CD4-positive, alpha-beta T cell (primary cell): ENCODE measurements at regions of chr6 and their contacts with region 1.

Region 1: GRCh38 chr6:38702558-38703397 is at the start of gene GLO1:
- DNase-seq: peak; percentile 90 to 98 (median 94)
- ATAC-seq: peak; percentile 99
- H3K4me3 ChIP-seq: peak within 1 kb of the TSS; percentile 82
- H3K4me3 Mint-ChIP-seq: peak within 1 kb of the TSS; percentile 94
- H3K27ac ChIP-seq: peak within 1 kb of the TSS; percentile 82 to 84
- H3K27ac Mint-ChIP-seq: peak within 1 kb of the TSS; percentile 81
- H3K4me1 ChIP-seq: peaks cover 9% of the 10 kb centered on the region
- H3K4me1 Mint-ChIP-seq: peaks cover 29% of the 10 kb centered on the region
- H3K27me3 ChIP-seq: no peaks in the 10 kb centered on the region
- H3K27me3 Mint-ChIP-seq: peaks cover 15% of the 10 kb centered on the region
- CTCF ChIP-seq: no peak
- total RNA-seq, gene GLO1: 24.1 to 26.2 TPM

Region 2: DNA sequence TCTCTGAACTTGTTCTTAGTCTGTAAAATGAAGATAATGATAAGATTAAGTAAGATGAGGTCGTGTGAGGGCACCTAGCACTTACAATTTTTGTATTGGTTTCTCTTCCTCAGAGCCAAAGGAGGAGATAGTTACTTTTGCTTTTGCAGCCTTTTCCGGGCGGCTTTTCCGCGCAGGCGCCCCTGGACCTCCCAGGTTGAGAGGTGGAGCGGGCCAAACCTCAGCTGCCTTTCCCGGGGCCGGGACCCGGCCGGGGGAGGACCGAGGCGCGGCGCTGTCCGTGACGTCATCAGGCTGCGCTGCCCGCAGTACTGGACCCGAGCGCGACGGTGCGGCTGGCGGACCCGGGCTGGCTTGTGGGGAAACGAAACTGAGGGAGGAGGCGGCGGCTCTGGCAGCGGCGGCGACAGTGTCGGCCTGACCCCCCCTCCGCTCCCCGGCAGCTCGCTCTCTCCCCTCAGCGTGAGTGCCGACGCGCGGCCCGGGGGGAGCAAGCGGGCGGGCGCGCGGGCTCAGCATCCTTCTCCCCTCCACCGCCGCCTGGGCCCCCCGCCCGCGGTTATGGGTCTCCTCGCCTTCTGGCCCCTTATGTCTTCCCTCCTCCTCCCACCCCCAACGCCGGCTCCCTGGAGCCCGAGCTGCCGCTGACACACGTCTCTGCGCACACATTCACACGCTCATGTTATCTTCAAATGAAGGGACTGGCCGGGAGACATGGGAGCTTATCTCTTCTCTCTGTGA is 1269.7 kb before region 1 on chr6 and contains the start of gene CMTR1:
- CTCF ChIA-PET with region 1: no interaction called
- POLR2A ChIA-PET with region 1: no interaction called
- intact Hi-C with region 1: loop called in 1 of 2 experiments (anchors 5 kb)
- DNase-seq: peak; percentile 91 to 99 (median 96)
- ATAC-seq: peak; percentile 89
- H3K4me3 ChIP-seq: peak within 1 kb of the TSS; percentile 98
- H3K4me3 Mint-ChIP-seq: peak within 1 kb of the TSS; percentile 95
- H3K27ac ChIP-seq: peak within 1 kb of the TSS; percentile 91
- H3K27ac Mint-ChIP-seq: peak within 1 kb of the TSS; percentile 95
- H3K4me1 ChIP-seq: peaks cover 29% of the 10 kb centered on the region
- H3K4me1 Mint-ChIP-seq: peaks cover 45% of the 10 kb centered on the region
- H3K27me3 ChIP-seq: no peaks in the 10 kb centered on the region
- H3K27me3 Mint-ChIP-seq: peaks cover 6% of the 10 kb centered on the region
- CTCF ChIP-seq: no peak
- total RNA-seq, gene CMTR1: 79.7 to 80.3 TPM

Region 3: GRCh38 chr6:38639498-38640215 is 63.1 kb before region 1 on chr6 and contains the start of gene BTBD9:
- CTCF ChIA-PET with region 1: no interaction called
- POLR2A ChIA-PET with region 1: interaction called, 18 read pairs
- intact Hi-C with region 1: loop called (anchors 1 to 5 kb)
- DNase-seq: peak; percentile 66 to 95 (median 80)
- ATAC-seq: peak; percentile 75
- H3K4me3 ChIP-seq: peak within 1 kb of the TSS; percentile 78
- H3K4me3 Mint-ChIP-seq: peak within 1 kb of the TSS; percentile 90
- H3K27ac ChIP-seq: peak within 1 kb of the TSS; percentile 94 to 99
- H3K27ac Mint-ChIP-seq: peak within 1 kb of the TSS; percentile 84
- H3K4me1 ChIP-seq: peaks cover 20% of the 10 kb centered on the region
- H3K4me1 Mint-ChIP-seq: peaks cover 52% of the 10 kb centered on the region
- H3K27me3 ChIP-seq: no peaks in the 10 kb centered on the region
- H3K27me3 Mint-ChIP-seq: no peaks in the 10 kb centered on the region
- CTCF ChIP-seq: no peak
- total RNA-seq, gene BTBD9: 58.7 to 59.3 TPM

Region 4: DNA sequence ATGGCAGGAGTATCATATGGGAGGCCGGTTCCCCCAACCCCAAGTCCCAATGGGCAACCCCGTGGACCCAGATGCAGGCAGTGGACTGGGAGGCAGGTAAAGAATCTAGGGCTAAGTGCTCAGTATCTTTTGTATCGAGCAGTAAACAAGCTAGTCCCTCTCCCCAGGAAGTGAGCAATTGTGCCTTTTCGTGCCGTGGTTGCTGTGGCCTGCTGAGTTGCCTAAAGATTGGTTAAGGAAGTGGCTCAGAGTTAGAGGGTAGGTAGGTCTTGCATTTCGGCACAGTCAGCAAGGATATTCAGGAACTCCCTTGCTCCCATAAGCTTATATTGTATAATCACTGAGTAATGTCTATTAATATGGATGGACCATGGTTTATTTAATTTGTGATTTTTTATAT is 11.0 kb after region 1 on chr6:
- CTCF ChIA-PET with region 1: interaction called, 3 read pairs
- POLR2A ChIA-PET with region 1: interaction called, 20 read pairs
- intact Hi-C with region 1: no loop called
- DNase-seq: peak in 12 of 14 experiments; percentile 5 to 79 (median 31)
- ATAC-seq: peak; percentile 80
- H3K4me3 ChIP-seq: no peak overlapping the region
- H3K4me3 Mint-ChIP-seq: no peak overlapping the region
- H3K27ac ChIP-seq: no peak overlapping the region
- H3K27ac Mint-ChIP-seq: peak overlapping the region; percentile 28
- H3K4me1 ChIP-seq: peaks cover 19% of the 10 kb centered on the region
- H3K4me1 Mint-ChIP-seq: peaks cover 15% of the 10 kb centered on the region
- H3K27me3 ChIP-seq: peaks cover 11 to 18% of the 10 kb centered on the region in 2 experiments
- H3K27me3 Mint-ChIP-seq: peaks cover 42% of the 10 kb centered on the region
- CTCF ChIP-seq: no peak

Region 5: GRCh38 chr6:39724787-39725631 is 1022.2 kb after region 1 on chr6 and contains the start of gene KIF6:
- CTCF ChIA-PET with region 1: no interaction called
- POLR2A ChIA-PET with region 1: no interaction called
- intact Hi-C with region 1: loop called in 1 of 2 experiments (anchors 10 kb)
- DNase-seq: peak; percentile 55 to 88 (median 72)
- ATAC-seq: peak; percentile 99
- H3K4me3 ChIP-seq: peak within 1 kb of the TSS; percentile 56
- H3K4me3 Mint-ChIP-seq: peak within 1 kb of the TSS; percentile 99
- H3K27ac ChIP-seq: no peak within 1 kb of the TSS
- H3K27ac Mint-ChIP-seq: peak within 1 kb of the TSS; percentile 45
- H3K4me1 ChIP-seq: peaks cover 7% of the 10 kb centered on the region
- H3K4me1 Mint-ChIP-seq: peaks cover 8% of the 10 kb centered on the region
- H3K27me3 ChIP-seq: no peaks in the 10 kb centered on the region
- H3K27me3 Mint-ChIP-seq: peaks cover 9% of the 10 kb centered on the region
- CTCF ChIP-seq: no peak
- total RNA-seq, gene KIF6: not detected